ENCODE measurements at regions of chr4 and their contacts with region 1.

Region 1: GRCh38 chr4:37977471-37978247 is 17.5 kb downstream of the PTTG2 start:
- DNase-seq: peak in 1 of 2 experiments; percentile 49
- H3K4me3 ChIP-seq: peak overlapping the region; percentile 64
- H3K27ac ChIP-seq: peak overlapping the region; percentile 50
- H3K4me1 ChIP-seq: peaks cover 46% of the 10 kb centered on the region
- H3K27me3 ChIP-seq: no peaks in the 10 kb centered on the region
- CTCF ChIP-seq: peak; percentile 47; the same call in 1 of the 2 replicates

Region 2: DNA sequence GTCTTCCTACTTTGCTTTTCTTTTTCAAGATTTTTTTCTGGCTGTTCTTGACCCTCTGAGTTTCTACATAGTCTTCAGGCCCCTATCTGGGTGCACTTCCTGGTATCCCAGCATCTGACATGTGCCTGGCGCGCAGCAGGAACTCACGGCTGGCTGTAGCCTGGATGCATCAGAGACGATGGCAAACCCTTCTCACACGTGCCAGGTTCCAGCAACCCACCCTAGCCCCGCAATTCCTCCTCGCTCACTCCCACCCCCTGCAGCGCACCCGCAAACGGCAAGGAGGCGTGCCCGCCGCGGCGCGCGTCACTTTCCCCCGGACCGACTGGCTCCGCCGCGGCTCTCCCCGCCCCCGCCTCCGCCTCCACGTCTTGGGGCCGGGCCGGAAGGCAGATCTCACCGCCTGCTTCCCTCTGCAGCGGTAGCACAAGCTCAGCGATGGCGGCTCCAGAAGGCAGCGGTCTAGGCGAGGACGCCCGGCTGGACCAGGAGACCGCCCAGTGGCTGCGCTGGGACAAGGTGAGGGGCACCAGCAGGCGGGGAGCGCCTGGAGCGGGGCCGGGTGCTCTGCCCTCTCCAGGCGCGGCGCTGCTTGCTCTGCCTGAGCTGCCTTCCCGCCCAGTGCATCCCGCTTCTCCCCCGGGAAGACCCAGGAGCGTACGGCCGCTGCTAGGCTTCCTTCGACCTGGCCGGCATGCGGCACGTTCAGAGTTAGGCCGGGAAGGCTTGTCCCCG is 151.2 kb before region 1 on chr4 and contains the start of gene PGM2:
- CTCF ChIA-PET with region 1: no interaction called
- POLR2A ChIA-PET with region 1: no interaction called
- intact Hi-C with region 1: loop called (anchors 2 kb)
- DNase-seq: peak; percentile 64 to 83
- H3K4me3 ChIP-seq: peak within 1 kb of the TSS; percentile 91
- H3K27ac ChIP-seq: peak within 1 kb of the TSS; percentile 54
- H3K4me1 ChIP-seq: peaks cover 20% of the 10 kb centered on the region
- H3K27me3 ChIP-seq: no peaks in the 10 kb centered on the region
- CTCF ChIP-seq: no peak
- total RNA-seq, gene PGM2: 27.3 and 32.5 TPM in 2 replicates

Region 3: GRCh38 chr4:38023347-38024205 is 45.9 kb after region 1 on chr4:
- CTCF ChIA-PET with region 1: no interaction called
- POLR2A ChIA-PET with region 1: interaction called, 6 read pairs
- intact Hi-C with region 1: loop called (anchors 5 kb)
- DNase-seq: no peak
- H3K4me3 ChIP-seq: no peak overlapping the region
- H3K27ac ChIP-seq: no peak overlapping the region
- H3K4me1 ChIP-seq: no peaks in the 10 kb centered on the region
- H3K27me3 ChIP-seq: no peaks in the 10 kb centered on the region
- CTCF ChIP-seq: no peak

Region 4: GRCh38 chr4:38034986-38035882 is 57.6 kb after region 1 on chr4:
- CTCF ChIA-PET with region 1: interaction called, 4 read pairs
- POLR2A ChIA-PET with region 1: no interaction called
- intact Hi-C with region 1: loop called (anchors 5 kb)
- DNase-seq: peak; percentile 10 to 48
- H3K4me3 ChIP-seq: no peak overlapping the region
- H3K27ac ChIP-seq: no peak overlapping the region
- H3K4me1 ChIP-seq: no peaks in the 10 kb centered on the region
- H3K27me3 ChIP-seq: no peaks in the 10 kb centered on the region
- CTCF ChIP-seq: peak; percentile 85